CD14-positive monocyte (primary cell): ENCODE measurements at regions of chr10 and their contacts with region 1.

Region 1: DNA sequence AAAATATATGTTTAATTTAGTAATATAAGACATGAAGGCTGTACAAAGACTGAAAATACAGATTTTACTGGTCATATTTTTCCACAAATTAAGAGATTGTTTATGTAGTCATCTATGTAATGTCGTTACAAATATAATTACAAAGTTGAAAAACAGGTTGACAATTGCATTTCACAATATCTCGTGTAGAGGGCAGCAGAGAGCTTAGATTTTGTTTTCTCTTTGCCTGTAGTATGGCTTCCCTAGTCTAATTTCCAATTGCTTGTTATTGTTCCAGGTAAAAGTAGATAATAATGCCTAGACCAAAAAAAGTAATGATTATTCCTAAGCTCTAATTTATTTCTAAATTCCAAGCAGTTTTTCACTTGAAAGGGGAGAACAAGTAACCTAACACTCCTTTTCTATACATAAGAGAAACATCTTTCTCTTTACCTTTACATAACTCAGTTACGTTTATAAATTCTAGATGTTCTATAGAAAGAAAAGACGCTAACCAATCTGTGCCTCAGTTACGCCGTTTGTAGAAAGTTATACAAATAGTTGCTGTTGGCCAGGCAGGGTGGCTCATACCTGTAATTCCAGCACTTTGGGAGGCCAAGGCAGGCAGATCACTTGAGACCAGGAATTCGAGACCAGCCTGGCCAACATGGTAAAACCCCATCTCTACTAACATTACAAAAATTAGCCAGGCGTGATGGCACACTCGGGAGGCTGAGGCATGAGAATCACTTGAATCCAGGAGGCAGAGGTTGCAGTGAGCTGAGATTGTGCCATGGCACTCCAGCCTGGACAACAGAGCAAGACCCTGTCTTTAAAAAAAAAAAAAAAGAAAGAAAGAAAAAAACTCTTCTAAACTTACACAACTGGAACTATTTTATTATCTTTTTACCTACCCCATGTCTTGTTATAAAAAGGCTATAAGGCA is 30.0 kb downstream of the NET1 start:
- DNase-seq: peak; percentile 22 to 61 (median 33)
- H3K4me3 ChIP-seq: no peak overlapping the region
- H3K4me3 Mint-ChIP-seq: no peak overlapping the region
- H3K27ac ChIP-seq: no peak overlapping the region
- H3K27ac Mint-ChIP-seq: no peak overlapping the region
- H3K4me1 ChIP-seq: peaks cover 6 to 8% of the 10 kb centered on the region in 2 donors
- H3K4me1 Mint-ChIP-seq: peaks cover 11% of the 10 kb centered on the region
- H3K27me3 ChIP-seq: no peaks in the 10 kb centered on the region
- H3K27me3 Mint-ChIP-seq: peaks cover 0 to 3% (median 0%) of the 10 kb centered on the region in 3 donors
- CTCF ChIP-seq: peak; percentile 85

Region 2: GRCh38 chr10:5623081-5623748 is 180.9 kb after region 1 on chr10:
- intact Hi-C with region 1: loop called (anchors 5 kb)
- DNase-seq: peak; percentile 56 to 69 (median 67)
- H3K4me3 ChIP-seq: no peak overlapping the region
- H3K4me3 Mint-ChIP-seq: no peak overlapping the region
- H3K27ac ChIP-seq: no peak overlapping the region
- H3K27ac Mint-ChIP-seq: no peak overlapping the region
- H3K4me1 ChIP-seq: no peaks in the 10 kb centered on the region
- H3K4me1 Mint-ChIP-seq: peaks cover 3% of the 10 kb centered on the region
- H3K27me3 ChIP-seq: no peaks in the 10 kb centered on the region
- H3K27me3 Mint-ChIP-seq: peaks cover 0 to 3% (median 3%) of the 10 kb centered on the region in 3 donors
- CTCF ChIP-seq: peak; percentile 84

Region 3: DNA sequence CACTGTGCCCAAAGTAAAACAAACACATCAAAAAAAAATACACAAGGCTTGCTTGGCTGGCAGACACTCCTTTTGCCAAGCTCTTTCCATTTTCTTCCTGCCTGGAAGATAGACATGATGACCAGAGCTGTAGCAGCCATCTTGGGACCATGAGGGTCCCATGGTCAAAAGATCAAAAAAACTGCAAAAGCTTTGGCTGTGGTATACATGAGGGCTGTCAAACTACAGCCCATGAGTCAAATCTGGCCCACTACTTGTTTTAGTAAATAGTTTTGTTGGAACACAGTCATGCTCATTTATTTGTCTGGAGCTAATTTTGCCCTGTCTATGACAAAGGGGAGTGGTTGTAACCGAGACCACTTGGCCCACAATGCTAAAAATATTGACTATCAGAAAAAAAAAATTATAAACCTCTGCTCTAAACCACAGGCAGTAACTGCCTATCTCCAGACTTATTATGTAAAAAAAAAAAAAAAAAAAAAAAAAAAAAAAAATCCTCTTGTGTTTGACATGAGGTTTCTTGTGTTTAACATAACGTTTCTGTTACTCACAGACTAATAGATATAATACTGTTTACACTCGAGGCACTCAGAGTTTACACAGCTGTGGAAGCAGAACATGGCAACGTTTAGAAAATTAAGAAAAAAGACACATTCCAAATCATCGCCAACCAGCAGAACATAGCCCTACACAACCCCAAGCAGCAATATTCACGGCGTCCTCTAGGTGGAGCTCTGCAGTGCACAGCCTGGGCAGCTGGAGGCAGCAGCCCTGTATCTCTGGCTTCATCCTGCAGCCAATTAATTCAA is 187.2 kb after region 1 on chr10:
- intact Hi-C with region 1: loop called (anchors 5 kb)
- DNase-seq: peak; percentile 60 to 64 (median 60)
- H3K4me3 ChIP-seq: no peak overlapping the region
- H3K4me3 Mint-ChIP-seq: no peak overlapping the region
- H3K27ac ChIP-seq: no peak overlapping the region
- H3K27ac Mint-ChIP-seq: no peak overlapping the region
- H3K4me1 ChIP-seq: no peaks in the 10 kb centered on the region
- H3K4me1 Mint-ChIP-seq: peaks cover 8% of the 10 kb centered on the region
- H3K27me3 ChIP-seq: peaks cover 0 to 2% of the 10 kb centered on the region in 2 donors
- H3K27me3 Mint-ChIP-seq: peaks cover 4 to 8% (median 6%) of the 10 kb centered on the region in 3 donors
- CTCF ChIP-seq: peak; percentile 85